HEK293T (cell line): ENCODE measurements at regions of chr22 and their contacts with region 1.

Region 1: DNA sequence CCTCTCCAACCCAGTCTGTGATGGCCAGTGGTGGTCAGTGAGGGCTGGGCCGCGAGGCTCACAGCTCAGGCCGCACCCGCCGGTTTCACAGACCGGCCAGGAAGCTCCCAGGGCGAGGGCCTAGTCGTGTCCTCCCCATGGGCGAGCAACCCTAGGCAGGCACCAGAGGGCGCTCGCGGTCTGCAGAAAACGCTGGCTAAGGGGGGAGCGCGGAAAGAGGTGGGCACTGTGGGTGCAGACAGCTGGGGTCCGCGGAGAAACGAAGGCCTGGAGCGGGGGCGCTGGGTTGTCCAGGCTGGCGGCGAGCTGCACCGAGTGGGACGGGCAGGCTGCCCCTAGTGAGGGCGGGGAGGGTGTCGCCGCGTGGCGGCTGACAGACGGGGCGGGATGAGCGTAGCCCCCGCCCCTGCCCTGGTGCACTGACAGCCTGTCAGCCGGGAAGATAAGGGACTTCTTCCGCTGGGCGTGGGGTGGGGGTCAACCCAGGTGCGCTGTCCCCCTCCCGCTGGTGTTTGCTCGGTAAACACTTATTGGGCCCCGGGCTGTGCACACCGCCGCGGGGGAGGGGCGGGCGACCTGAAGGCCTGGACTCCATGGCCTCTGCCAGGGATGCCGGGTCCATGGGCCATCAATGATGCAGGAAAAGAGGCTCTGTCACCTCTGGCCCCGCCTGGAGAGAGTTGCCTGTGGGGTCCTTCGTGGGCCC is 7.5 kb downstream of the GP1BB start:
- DNase-seq: peak; percentile 89

Region 2: GRCh38 chr22:19641254-19641982 is 89.4 kb before region 1 on chr22:
- CTCF ChIA-PET with region 1: no interaction called
- POLR2A ChIA-PET with region 1: no interaction called
- DNase-seq: peak; percentile 54

Region 3: DNA sequence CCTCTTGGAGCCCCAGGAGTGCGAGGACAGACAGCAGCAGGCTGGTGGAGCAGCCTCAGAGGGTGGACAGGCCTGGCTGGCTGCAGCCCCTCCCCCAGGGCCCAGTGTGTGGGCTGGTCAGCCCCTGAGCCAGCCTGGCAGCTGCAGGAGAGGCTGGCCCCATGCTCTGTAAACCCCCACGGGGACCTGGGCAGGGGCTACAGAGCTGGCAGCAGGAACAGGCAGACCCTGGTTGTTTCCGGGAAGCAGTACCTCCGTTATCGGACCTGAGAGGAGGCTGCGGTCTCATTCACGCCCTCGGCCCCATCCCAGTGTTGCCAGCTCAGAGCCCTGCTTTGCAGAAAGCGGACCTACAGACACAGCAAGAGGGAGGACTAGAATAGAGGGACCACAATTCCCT is 172.2 kb after region 1 on chr22:
- CTCF ChIA-PET with region 1: interaction called, 16 read pairs
- POLR2A ChIA-PET with region 1: interaction called, 3 read pairs
- DNase-seq: no peak

Region 4: DNA sequence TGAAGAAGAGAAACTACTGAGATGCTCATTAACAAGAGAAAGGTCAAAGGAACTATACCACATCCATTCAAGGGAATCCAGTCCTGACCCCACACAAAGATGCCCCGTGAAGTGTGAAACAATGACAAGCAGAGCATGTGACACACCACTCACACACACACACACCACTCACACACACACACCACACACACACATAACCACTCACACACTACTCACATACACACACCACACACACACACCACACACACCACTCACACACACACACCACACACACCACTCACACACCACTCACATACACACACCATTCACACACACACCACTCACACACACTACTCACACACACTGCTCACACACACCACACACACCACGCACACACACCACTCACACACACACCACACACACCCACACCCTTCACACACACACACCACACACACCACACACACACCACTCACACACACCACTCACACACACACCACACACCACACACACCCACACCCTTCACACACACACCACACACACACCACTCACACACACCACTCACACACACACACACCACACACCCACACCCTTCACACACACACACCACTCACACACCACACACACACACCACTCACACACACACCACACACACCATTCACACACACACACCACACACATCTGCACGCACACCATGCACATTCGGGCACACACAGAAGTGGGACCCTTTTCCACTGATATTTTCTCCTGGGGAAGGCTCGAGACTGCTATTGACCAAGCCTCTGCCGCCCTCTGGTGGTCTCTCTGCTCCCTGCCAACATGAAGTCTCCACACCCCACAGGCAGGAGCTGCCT is 178.8 kb after region 1 on chr22:
- CTCF ChIA-PET with region 1: interaction called, 37 read pairs
- POLR2A ChIA-PET with region 1: interaction called, 3 read pairs
- DNase-seq: peak; percentile 92

Region 5: DNA sequence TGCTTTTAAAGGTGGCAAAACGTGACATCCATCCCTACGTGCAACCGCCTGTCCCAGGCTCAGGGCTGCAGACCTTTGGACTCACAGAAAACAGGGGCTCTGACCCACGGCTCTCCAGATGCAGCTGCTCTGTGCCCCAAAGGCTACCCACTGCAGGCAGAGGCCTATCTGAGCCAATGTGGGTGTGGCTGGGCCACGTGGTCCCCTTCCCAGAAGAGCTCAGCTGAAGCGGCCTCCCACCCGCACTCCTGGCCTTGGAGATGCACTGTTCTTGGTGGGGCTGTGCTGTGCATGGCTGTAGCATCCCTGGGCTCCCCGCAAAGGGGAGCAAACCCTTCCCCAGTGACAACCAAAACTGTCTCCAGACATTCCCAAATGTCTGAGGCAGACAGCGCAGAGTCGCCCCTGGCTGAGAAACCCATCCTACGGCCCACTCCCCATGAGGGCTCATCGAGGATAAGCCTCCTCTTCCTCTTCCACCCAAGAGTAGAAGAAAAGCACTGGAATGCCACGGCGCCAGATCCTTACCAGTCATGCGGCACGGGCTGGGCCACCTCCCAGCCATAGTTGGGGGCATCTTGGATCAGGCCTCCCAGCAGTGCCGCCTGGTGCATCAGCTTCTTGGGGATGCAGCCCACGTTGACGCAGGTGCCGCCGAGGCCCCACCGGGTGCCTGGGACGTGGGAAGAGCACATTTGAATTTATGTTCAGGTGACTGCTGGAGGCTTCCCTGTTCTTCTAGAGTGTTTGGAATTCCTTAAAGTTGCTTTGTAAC is 187.7 kb after region 1 on chr22:
- CTCF ChIA-PET with region 1: interaction called, 13 read pairs
- POLR2A ChIA-PET with region 1: no interaction called
- DNase-seq: no peak